Pancreas (tissue), 10 donors: ENCODE measurements at regions of chr16 and their contacts with region 1.

Region 1: DNA sequence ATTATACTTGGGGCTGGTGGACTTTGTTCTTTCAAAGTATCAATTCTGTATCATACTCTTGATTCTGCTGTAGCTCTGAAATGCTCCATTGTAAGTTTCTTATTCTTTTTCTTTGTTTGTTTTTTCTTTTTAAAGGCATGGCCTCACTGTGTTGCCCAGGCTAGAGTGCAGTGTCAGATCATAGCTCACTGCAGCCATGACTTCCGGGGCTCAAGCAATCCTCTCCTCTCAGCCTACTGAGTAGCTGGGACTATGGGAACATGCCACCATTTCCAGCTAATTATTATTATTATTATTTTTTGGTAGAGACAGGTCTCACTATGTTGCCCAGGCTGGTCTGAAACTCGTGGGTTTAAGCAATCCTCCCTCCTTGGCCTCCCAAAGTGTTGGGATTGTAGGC is 38.9 kb upstream of the METTL9 start:
- DNase-seq: no peak
- ATAC-seq: no peak
- H3K4me3 ChIP-seq: no peak overlapping the region
- H3K27ac ChIP-seq: no peak overlapping the region
- H3K4me1 ChIP-seq: peaks cover under 1 to 2% (median 1%) of the 10 kb centered on the region in 3 donors
- H3K27me3 ChIP-seq: no peaks in the 10 kb centered on the region
- CTCF ChIP-seq: no peak

Region 2: GRCh38 chr16:22694887-22695382 is 1134.5 kb after region 1 on chr16:
- intact Hi-C with region 1: loop called in 1 of 3 experiments (anchors 5 kb)
- DNase-seq: no peak
- ATAC-seq: peak in 2 of 4 donors; percentile 35 to 39
- H3K4me3 ChIP-seq: no peak overlapping the region
- H3K27ac ChIP-seq: no peak overlapping the region
- H3K4me1 ChIP-seq: no peaks in the 10 kb centered on the region
- H3K27me3 ChIP-seq: no peaks in the 10 kb centered on the region
- CTCF ChIP-seq: no peak